Activated CD4-positive, alpha-beta T cell treated with anti-CD3 and anti-CD28 coated beads, Interleukin-2, amount 10 ng/mL, durations not matched to agents 24 days and 14 days (primary cell): ENCODE measurements at regions of chr6 and their contacts with region 1.

Region 1: GRCh38 chr6:26363882-26364701 is 906 bp upstream of the BTN3A2 start:
- DNase-seq: peak; percentile 75
- H3K4me3 Mint-ChIP-seq: no peak overlapping the region
- H3K27ac Mint-ChIP-seq: no peak overlapping the region
- H3K4me1 Mint-ChIP-seq: peaks cover 41% of the 10 kb centered on the region
- H3K27me3 Mint-ChIP-seq: no peaks in the 10 kb centered on the region

Region 2: GRCh38 chr6:26329763-26330511 is 34.2 kb before region 1 on chr6:
- intact Hi-C with region 1: loop called (anchors 5 kb)
- DNase-seq: peak; percentile 89
- H3K4me3 Mint-ChIP-seq: peak overlapping the region; percentile 87
- H3K27ac Mint-ChIP-seq: peak overlapping the region; percentile 86
- H3K4me1 Mint-ChIP-seq: peaks cover 48% of the 10 kb centered on the region
- H3K27me3 Mint-ChIP-seq: peaks cover 25% of the 10 kb centered on the region

Region 3: DNA sequence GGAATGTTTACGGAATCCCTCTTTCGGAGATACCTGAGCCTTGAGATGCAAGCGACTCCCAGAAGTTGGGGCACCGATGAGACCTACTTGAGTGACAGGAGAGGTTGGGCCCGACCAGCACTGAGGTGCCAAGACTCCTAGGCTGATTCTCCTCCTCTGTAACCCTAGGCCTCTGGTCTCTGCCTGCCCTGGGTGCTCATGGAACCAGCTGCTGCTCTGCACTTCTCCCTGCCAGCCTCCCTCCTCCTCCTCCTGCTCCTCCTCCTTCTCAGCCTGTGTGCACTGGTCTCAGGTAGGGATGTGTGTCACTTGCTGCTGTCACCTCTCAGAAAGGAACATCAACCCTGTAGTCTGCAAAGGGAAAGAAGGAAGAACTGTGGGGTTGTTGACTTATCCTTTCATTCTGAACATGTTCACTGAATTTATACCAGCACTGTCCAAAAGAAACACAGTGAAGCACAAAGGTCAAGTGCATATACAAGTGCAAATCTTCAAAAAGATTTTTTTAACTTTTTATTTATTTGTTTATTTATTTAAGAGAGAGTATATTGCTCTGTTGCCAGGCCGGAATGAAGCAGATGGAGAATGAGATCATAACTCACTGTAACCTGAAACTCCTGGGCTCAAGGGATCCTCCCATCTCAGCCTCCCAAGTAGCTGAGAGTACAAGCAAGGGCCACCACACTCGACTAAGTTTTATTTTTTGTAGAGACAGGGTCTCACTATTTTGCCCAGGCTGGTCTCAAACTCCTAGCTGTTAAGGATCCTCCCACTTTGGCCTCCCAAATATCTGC is 19.7 kb after region 1 on chr6:
- intact Hi-C with region 1: loop called (anchors 1 kb)
- DNase-seq: peak; percentile 73
- H3K4me3 Mint-ChIP-seq: peak overlapping the region; percentile 96
- H3K27ac Mint-ChIP-seq: peak overlapping the region; percentile 96
- H3K4me1 Mint-ChIP-seq: peaks cover 37% of the 10 kb centered on the region
- H3K27me3 Mint-ChIP-seq: no peaks in the 10 kb centered on the region

Region 4: GRCh38 chr6:26457806-26458688 is 94.0 kb after region 1 on chr6 and contains the start of gene BTN2A1:
- intact Hi-C with region 1: loop called (anchors 5 kb)
- DNase-seq: peak; percentile 92
- H3K4me3 Mint-ChIP-seq: peak within 1 kb of the TSS; percentile 95
- H3K27ac Mint-ChIP-seq: peak within 1 kb of the TSS; percentile 94
- H3K4me1 Mint-ChIP-seq: peaks cover 48% of the 10 kb centered on the region
- H3K27me3 Mint-ChIP-seq: no peaks in the 10 kb centered on the region
- total RNA-seq, gene BTN2A1: 16.5 and 19.8 TPM in 2 replicates

Region 5: GRCh38 chr6:26468829-26469228 is 104.7 kb after region 1 on chr6:
- intact Hi-C with region 1: no loop called
- DNase-seq: no peak
- H3K4me3 Mint-ChIP-seq: no peak overlapping the region
- H3K27ac Mint-ChIP-seq: peak overlapping the region; percentile 23
- H3K4me1 Mint-ChIP-seq: peaks cover 30% of the 10 kb centered on the region
- H3K27me3 Mint-ChIP-seq: no peaks in the 10 kb centered on the region